Panc1 (cell line): ENCODE measurements at regions of chr4 and their contacts with region 1.

Region 1: DNA sequence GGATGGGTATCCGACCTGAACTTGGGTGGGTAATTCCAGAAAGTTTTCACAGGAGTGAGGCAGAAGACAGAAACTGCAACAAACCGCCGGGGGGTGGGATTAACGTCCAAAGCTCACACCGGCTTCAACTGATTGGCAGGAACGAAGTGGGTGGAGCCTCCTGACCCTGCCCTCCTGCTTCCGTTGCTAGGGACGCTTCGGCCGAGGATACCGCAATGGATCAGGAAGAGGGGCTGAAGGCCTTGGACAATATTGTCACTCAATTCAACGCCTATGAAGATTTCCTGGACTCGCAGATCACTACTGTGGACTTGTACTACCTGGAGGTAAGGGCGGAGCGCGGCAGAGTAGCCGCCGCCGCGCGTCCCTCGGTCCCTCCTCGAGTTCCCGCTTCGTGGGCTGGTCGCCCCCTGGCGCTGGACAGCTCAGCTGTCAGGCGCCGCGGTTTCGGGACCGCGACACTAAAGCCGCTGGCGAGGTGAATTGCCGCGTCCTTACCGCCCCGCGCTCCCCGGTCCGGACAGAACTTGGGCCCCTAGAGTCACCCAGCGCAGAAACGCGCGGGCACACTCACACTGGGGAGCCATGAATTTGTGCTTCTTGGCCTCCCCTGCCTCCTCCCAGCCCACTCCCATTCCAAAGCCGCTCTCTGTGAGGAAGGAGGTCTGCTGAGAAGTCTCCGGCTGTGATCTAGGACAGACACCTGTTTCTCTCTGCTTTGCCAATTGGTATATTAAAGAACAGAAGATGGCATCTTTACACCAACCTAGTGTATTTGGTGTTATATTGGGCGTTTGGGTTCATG is at the start of gene CFAP299:
- DNase-seq: peak; percentile 73
- ATAC-seq: peak; percentile 99
- H3K4me3 ChIP-seq: peak within 1 kb of the TSS; percentile 58 to 67
- H3K27ac ChIP-seq: peak within 1 kb of the TSS; percentile 76
- H3K4me1 ChIP-seq: no peaks in the 10 kb centered on the region
- H3K27me3 ChIP-seq: no peaks in the 10 kb centered on the region
- CTCF ChIP-seq: peak; percentile 72
- total RNA-seq, gene CFAP299: not detected

Region 2: GRCh38 chr4:80221161-80221560 is 114.6 kb before region 1 on chr4:
- CTCF ChIA-PET with region 1: interaction called, 6 read pairs
- POLR2A ChIA-PET with region 1: no interaction called
- in situ Hi-C with region 1: no loop called
- intact Hi-C with region 1: loop called (anchors 5 kb)
- DNase-seq: no peak
- ATAC-seq: no peak
- H3K4me3 ChIP-seq: no peak overlapping the region
- H3K27ac ChIP-seq: no peak overlapping the region
- H3K4me1 ChIP-seq: no peaks in the 10 kb centered on the region
- H3K27me3 ChIP-seq: no peaks in the 10 kb centered on the region
- CTCF ChIP-seq: peak; percentile 38; the same call in 1 of the 2 replicates

Region 3: DNA sequence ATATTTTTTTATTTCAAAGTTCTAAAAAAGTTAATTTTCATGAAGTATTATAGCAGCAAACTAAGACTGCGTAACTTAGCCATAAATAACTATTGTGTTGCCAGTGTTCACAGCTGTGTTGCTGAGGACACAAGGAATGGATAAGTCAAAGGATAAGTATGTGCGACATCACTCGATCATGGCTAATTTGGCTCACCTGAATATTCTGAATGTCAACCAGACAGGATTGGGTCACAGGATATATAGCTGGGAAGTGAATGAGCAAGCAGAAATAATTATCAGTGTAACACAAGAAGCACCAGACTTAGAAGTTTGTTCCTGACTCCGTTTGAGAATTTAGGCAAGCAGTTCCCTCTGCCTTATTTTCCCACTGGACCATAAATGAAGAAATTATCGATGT is 104.6 kb before region 1 on chr4:
- CTCF ChIA-PET with region 1: no interaction called
- POLR2A ChIA-PET with region 1: no interaction called
- in situ Hi-C with region 1: no loop called
- intact Hi-C with region 1: loop called (anchors 5 kb)
- DNase-seq: no peak
- ATAC-seq: no peak
- H3K4me3 ChIP-seq: no peak overlapping the region
- H3K27ac ChIP-seq: no peak overlapping the region
- H3K4me1 ChIP-seq: no peaks in the 10 kb centered on the region
- H3K27me3 ChIP-seq: no peaks in the 10 kb centered on the region
- CTCF ChIP-seq: no peak